K562 (cell line): ENCODE measurements at regions of chr18 and their contacts with region 1.

Region 1: GRCh38 chr18:76982841-76983587 is 149.6 kb downstream of the MBP start:
- DNase-seq: peak; percentile 82 to 84 (median 83)
- ATAC-seq: peak; percentile 96
- H3K4me3 ChIP-seq: no peak overlapping the region
- H3K27ac ChIP-seq: no peak overlapping the region
- H3K4me1 ChIP-seq: peaks cover 0 to 8% of the 10 kb centered on the region in 2 experiments; a peak in 2 of 5 replicates
- H3K27me3 ChIP-seq: peaks cover 19 to 67% of the 10 kb centered on the region in 2 experiments
- CTCF ChIP-seq: peak; percentile 78 to 86 (median 80)
- EP300 ChIP-seq: no peak
- POLR2A ChIP-seq: no peak
- RAD21 ChIP-seq: peak; percentile 37 to 60

Region 2: GRCh38 chr18:76875390-76876325 is 107.4 kb before region 1 on chr18:
- CTCF ChIA-PET with region 1: interaction called, 10 read pairs
- POLR2A ChIA-PET with region 1: no interaction called
- in situ Hi-C with region 1: no loop called
- intact Hi-C with region 1: loop called (anchors 1 kb)
- DNase-seq: peak; percentile 24 to 64 (median 31)
- ATAC-seq: peak; percentile 94
- H3K4me3 ChIP-seq: no peak overlapping the region
- H3K27ac ChIP-seq: no peak overlapping the region
- H3K4me1 ChIP-seq: no peaks in the 10 kb centered on the region
- H3K27me3 ChIP-seq: no peaks in the 10 kb centered on the region
- CTCF ChIP-seq: peak; percentile 57 to 67 (median 60); a peak in 5 of 6 replicates
- EP300 ChIP-seq: no peak
- POLR2A ChIP-seq: no peak
- RAD21 ChIP-seq: peak; percentile 10 to 51; a peak in 2 of 4 replicates

Region 3: DNA sequence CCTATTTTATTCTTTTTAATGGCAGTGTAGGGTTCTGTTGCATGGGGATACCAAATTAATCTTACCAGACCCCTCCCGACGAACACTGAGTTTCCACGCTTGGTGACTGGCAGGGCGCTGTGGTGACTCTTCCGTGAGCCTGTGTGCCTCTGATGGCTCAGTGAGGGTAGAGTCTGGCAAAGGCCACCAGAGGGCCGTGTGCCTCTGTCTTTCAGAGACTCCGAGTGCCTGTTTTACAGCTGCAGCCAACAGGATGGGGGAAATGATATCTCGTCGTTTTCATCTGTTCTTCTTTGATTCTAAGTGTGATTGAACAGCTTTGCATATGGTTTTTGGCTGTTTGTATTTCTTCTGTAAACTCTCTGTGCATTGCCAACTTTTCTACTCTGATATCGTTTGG is 60.9 kb before region 1 on chr18:
- CTCF ChIA-PET with region 1: no interaction called
- POLR2A ChIA-PET with region 1: no interaction called
- in situ Hi-C with region 1: no loop called
- intact Hi-C with region 1: loop called (anchors 2 kb)
- DNase-seq: peak; percentile 11 to 22 (median 20)
- ATAC-seq: peak; percentile 87
- H3K4me3 ChIP-seq: no peak overlapping the region
- H3K27ac ChIP-seq: no peak overlapping the region
- H3K4me1 ChIP-seq: no peaks in the 10 kb centered on the region
- H3K27me3 ChIP-seq: no peaks in the 10 kb centered on the region
- CTCF ChIP-seq: peak; percentile 43 to 51 (median 47); a peak in 5 of 6 replicates
- EP300 ChIP-seq: no peak
- POLR2A ChIP-seq: no peak
- RAD21 ChIP-seq: peak in 1 of 2 experiments; percentile 37; a peak in 2 of 4 replicates